Posterior cingulate gyrus (tissue), 11 donors: ENCODE measurements at regions of chr15 and their contacts with region 1.

Region 1: DNA sequence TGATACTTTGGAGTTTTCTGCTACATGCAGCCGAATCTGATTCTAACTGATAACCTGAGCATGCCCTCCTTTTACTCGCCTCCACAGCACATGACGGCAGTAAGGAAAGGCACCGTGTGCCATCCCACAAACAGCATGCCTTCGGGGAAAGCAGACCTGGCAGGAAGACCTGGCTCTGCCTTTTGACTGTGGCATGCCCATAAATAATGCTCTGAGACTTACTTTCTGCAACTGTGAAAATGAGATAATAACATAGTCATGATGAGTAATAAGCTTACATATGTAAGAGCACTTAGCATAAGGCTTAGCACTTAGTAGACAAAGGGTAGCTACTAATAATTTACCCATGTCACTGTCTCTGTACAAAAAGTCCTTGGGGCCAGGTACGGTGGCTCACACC is 32.9 kb downstream of the MTHFS start:
- DNase-seq: no peak

Region 2: GRCh38 chr15:78925956-78926670 is 937.8 kb before region 1 on chr15:
- intact Hi-C with region 1: loop called (anchors 10 kb)
- DNase-seq: no peak

Region 3: GRCh38 chr15:79602731-79603130 is 261.2 kb before region 1 on chr15:
- intact Hi-C with region 1: no loop called
- DNase-seq: no peak

Region 4: GRCh38 chr15:79932447-79932846 is 68.6 kb after region 1 on chr15:
- intact Hi-C with region 1: no loop called
- DNase-seq: no peak